Activated CD4-positive, alpha-beta T cell treated with anti-CD3 and anti-CD28 coated beads for 36 hours (primary cell): ENCODE measurements at regions of chr1 and their contacts with region 1.

Region 1: DNA sequence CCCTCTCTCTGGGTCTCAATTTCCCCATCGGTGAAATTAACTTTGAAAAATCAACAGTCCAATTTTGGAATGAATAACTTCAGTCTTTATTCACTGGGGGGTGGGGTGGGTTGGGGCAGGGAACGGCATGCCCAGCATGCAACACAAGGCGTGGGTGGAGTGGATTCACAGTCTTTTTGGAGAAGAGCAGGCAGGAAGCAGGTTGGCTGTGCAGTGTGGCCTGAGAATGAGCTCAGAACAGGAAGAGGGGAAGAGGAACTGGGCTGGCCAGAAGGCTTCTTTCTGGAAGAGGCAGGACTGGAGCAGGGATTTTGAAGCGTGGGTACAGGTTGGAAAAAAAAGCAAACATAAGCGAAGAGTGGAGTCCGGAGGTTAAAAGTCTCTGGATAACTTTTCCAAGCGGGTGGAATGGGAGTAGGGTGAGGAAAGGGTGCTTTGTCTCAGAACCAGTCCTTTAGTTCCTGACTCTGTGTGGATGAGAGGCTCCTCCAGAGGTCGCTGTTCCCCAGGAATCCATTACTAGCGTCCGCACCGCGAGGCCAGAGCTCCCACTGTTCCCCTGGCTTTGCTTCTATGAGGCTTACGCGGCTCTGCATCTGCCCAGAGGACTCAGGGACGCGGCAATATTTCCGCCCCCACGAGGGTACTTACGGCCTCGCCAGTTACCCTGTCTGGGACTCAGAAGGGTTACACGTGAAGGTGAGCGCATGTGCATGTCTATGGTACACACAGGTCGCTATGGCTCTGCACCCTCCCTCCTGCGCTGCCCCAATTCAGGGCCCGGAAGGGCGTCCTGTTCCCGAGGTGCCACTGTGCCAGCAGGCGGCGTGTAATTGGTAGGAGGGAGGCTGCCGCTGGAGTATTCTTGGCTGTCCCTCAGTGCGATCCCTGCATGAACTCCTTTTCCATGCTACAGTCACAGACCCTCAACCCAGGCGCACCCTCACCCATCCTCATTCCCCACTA is 5.5 kb upstream of the FOXD2 start:
- DNase-seq: peak; percentile 81
- ATAC-seq: peak; percentile 55
- H3K4me3 Mint-ChIP-seq: peak overlapping the region; percentile 49
- H3K27ac Mint-ChIP-seq: no peak overlapping the region
- H3K4me1 Mint-ChIP-seq: peaks cover 31% of the 10 kb centered on the region
- H3K27me3 Mint-ChIP-seq: peaks cover 42% of the 10 kb centered on the region

Region 2: DNA sequence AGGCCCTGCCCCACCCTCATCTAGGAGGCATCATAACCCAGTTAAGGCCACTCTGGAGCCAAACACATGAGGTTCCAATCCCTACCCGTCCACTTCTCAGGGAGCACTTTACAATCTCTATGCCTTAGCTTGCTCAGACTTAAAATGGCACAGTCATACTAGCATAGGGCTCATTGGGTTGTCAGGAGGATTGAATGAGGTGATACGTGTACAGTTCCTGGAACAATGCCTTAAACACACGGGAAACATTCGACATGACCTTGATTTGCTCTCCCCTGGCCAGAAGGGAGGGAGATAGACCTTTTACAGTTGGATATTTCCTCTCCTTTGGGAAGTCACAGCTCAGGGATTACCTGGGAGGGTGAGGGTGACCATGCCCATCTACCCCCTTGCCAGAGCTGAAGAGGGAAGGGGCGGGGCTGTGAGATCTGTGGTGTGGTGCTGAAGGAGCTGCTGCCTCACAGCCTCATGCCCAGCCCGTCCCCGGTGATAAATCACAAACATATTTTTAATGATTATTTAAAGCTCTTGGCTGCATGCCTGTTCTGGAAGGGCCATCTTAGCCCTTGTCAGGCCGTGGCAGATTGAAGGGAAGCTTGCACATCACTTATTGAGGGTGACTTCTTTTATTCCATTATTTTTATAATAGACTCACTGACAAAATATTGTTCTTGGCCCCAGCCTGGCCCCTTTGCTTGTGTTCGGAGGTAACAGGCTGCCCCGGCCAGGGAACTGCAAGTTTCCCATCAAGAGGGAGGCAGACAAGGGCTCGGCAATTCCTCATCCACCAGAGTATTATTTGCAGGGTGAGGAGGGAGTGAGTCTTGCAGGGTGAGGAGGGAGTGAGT is 88.9 kb after region 1 on chr1:
- CTCF ChIA-PET with region 1: interaction called, 10 read pairs
- POLR2A ChIA-PET with region 1: interaction called, 3 read pairs
- intact Hi-C with region 1: no loop called
- DNase-seq: no peak
- ATAC-seq: no peak
- H3K4me3 Mint-ChIP-seq: no peak overlapping the region
- H3K27ac Mint-ChIP-seq: no peak overlapping the region
- H3K4me1 Mint-ChIP-seq: no peaks in the 10 kb centered on the region
- H3K27me3 Mint-ChIP-seq: peaks cover 51% of the 10 kb centered on the region